HEK293T (cell line): ENCODE measurements at regions of chr17 and their contacts with region 1.

Region 1: GRCh38 chr17:76182016-76182764 is 41.1 kb upstream of the FOXJ1 start:
- DNase-seq: peak; percentile 91

Region 2: GRCh38 chr17:76121932-76122430 is 60.2 kb before region 1 on chr17:
- CTCF ChIA-PET with region 1: interaction called, 13 read pairs
- POLR2A ChIA-PET with region 1: interaction called, 5 read pairs
- DNase-seq: no peak

Region 3: GRCh38 chr17:76264755-76265596 is 82.8 kb after region 1 on chr17 and contains the start of gene UBALD2:
- CTCF ChIA-PET with region 1: no interaction called
- POLR2A ChIA-PET with region 1: no interaction called
- DNase-seq: peak; percentile 95